B cell (primary cell): ENCODE measurements at regions of chr6 and their contacts with region 1.

Region 1: DNA sequence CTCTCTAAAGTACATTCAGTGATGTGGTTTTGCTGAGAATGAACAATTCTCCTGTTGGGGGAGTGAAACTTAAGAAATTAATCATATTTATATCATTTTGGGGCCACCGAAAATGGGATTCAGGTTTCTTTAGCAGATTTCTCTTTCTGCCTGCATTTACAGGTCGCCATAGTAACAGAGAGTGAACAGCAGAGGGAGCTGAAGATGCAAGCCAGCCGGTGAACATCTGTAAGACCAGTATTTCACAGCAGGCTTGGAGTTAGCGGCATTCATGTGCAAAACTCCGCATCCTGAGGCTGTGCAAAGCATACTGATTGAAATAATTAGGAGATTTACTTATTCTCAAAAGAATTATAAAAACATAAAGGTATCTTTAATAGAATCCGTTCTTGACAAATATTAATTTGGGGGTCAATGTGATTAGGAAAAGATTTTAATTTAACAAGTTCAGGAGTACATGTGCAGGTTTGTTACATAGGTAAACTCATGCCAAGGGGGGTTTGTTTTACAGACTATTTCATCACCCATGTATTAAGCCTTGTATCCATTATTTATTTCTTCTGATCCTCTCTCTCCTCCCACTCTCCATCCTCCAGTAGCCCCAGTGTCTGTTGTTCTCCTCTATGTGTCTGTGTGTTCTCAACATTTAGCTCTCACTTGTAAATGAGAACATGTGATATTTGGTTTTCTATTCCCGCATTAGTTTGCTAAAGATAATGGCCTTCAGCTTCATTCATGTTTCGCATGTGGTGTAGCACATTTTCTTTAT is 17.8 kb upstream of the HSF2 start:
- DNase-seq: peak; percentile 70
- ATAC-seq: peak; percentile 69
- H3K4me3 ChIP-seq: no peak overlapping the region
- H3K4me3 Mint-ChIP-seq: no peak overlapping the region
- H3K27ac ChIP-seq: no peak overlapping the region
- H3K27ac Mint-ChIP-seq: no peak overlapping the region
- H3K4me1 ChIP-seq: no peaks in the 10 kb centered on the region
- H3K4me1 Mint-ChIP-seq: peaks cover under 1% of the 10 kb centered on the region
- H3K27me3 ChIP-seq: no peaks in the 10 kb centered on the region
- H3K27me3 Mint-ChIP-seq: peaks cover 19% of the 10 kb centered on the region
- CTCF ChIP-seq: peak; percentile 87

Region 2: DNA sequence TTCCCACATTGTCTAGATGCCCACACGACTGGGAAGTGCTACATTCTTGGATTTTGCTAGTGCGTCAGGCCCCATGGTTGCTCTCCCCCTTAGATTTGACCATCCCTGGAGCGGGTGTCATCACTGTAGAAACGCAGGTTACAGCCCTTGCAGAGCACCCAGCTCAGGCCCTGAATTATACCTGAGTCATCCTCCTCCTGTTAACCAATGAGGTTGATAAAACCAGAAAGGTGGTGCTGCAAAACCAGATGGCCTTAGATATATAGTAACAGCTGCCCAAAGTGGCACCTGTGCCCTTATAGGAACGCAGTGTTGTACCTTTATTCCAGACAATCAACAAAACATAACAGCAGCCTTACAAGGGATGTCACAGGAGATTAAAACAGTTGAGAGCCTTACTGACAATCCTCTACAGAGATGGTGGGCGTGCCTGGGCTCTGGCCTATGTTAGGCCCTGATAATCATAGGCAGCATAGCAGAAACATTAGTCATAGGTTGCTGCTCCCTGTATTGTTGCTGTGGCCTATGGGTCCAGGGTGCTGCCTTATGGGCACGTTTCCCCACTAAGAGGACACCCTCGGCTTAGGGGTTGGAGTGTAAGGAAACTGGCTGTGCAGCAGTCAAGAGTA is 15.8 kb before region 1 on chr6:
- CTCF ChIA-PET with region 1: no interaction called
- POLR2A ChIA-PET with region 1: no interaction called
- intact Hi-C with region 1: no loop called
- DNase-seq: no peak
- ATAC-seq: no peak
- H3K4me3 ChIP-seq: no peak overlapping the region
- H3K4me3 Mint-ChIP-seq: no peak overlapping the region
- H3K27ac ChIP-seq: no peak overlapping the region
- H3K27ac Mint-ChIP-seq: no peak overlapping the region
- H3K4me1 ChIP-seq: no peaks in the 10 kb centered on the region
- H3K4me1 Mint-ChIP-seq: no peaks in the 10 kb centered on the region
- H3K27me3 ChIP-seq: no peaks in the 10 kb centered on the region
- H3K27me3 Mint-ChIP-seq: no peaks in the 10 kb centered on the region
- CTCF ChIP-seq: no peak

Region 3: DNA sequence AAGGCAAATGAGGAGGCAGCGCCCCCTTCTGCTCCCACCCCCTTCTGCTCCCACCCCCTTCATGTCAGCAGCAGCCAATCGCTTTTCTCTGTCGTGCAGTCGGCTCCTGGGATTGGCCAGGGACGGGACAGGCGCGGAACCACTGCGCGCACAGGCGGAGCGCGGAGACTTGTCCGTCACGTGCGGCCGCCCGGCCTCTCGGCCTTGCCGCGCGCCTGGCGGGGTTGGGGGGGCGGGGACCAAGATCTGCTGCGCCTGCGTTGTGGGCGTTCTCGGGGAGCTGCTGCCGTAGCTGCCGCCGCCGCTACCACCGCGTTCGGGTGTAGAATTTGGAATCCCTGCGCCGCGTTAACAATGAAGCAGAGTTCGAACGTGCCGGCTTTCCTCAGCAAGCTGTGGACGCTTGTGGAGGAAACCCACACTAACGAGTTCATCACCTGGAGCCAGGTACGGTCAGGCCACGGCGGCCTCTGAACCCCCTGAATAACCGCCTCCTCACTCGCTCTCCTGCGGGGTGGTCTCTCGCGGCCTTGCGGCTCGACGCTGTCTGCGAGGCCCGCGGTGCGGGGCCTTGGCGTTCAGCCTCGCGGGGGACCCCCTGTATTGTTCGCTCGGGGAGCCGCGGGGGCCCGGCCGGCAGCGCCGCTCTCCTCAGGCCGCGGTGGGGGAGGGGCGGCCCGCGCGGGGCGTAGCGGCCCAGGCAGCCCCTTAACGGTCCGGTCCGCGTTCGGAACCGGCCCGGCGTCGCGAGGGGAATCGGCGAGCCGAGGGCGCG is 17.9 kb after region 1 on chr6 and contains the start of gene HSF2:
- CTCF ChIA-PET with region 1: interaction called, 8 read pairs
- POLR2A ChIA-PET with region 1: no interaction called
- intact Hi-C with region 1: loop called (anchors 1 kb)
- DNase-seq: peak; percentile 96
- ATAC-seq: peak; percentile 98
- H3K4me3 ChIP-seq: peak within 1 kb of the TSS; percentile 80 to 98 (median 94)
- H3K4me3 Mint-ChIP-seq: peak within 1 kb of the TSS; percentile 97
- H3K27ac ChIP-seq: peak within 1 kb of the TSS; percentile 67 to 80
- H3K27ac Mint-ChIP-seq: peak within 1 kb of the TSS; percentile 89
- H3K4me1 ChIP-seq: peaks cover 12 to 13% of the 10 kb centered on the region in 2 donors
- H3K4me1 Mint-ChIP-seq: peaks cover 20% of the 10 kb centered on the region
- H3K27me3 ChIP-seq: no peaks in the 10 kb centered on the region
- H3K27me3 Mint-ChIP-seq: no peaks in the 10 kb centered on the region
- CTCF ChIP-seq: peak; percentile 15
- total RNA-seq, gene HSF2: 10.6 and 10.8 TPM in 2 replicates

Region 4: GRCh38 chr6:122416825-122417224 is 35.1 kb after region 1 on chr6:
- CTCF ChIA-PET with region 1: interaction called, 4 read pairs
- POLR2A ChIA-PET with region 1: no interaction called
- intact Hi-C with region 1: loop called (anchors 5 kb)
- DNase-seq: no peak
- ATAC-seq: no peak
- H3K4me3 ChIP-seq: no peak overlapping the region
- H3K4me3 Mint-ChIP-seq: no peak overlapping the region
- H3K27ac ChIP-seq: no peak overlapping the region
- H3K27ac Mint-ChIP-seq: no peak overlapping the region
- H3K4me1 ChIP-seq: no peaks in the 10 kb centered on the region
- H3K4me1 Mint-ChIP-seq: no peaks in the 10 kb centered on the region
- H3K27me3 ChIP-seq: no peaks in the 10 kb centered on the region
- H3K27me3 Mint-ChIP-seq: no peaks in the 10 kb centered on the region
- CTCF ChIP-seq: no peak

Region 5: DNA sequence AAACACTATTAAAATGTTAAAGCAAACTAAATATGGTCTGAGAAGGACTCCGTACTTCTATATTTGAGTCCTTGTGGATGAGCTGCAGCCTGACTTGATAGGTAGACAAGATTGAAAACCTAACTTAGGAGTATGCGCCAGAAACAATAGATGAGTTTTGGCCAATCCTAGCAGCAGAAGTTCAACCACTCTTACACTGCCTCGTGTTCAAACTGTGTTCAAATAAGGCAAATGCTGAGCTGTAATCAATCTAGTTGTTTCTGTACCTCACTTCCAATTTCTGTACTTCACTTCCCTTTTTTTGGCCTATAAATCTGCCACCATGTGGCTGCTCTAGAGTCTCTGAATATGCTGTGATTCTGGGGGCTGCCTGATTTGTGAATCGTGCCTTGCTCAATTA is 103.1 kb after region 1 on chr6:
- CTCF ChIA-PET with region 1: interaction called, 11 read pairs
- POLR2A ChIA-PET with region 1: no interaction called
- intact Hi-C with region 1: no loop called
- DNase-seq: peak; percentile 60
- ATAC-seq: peak; percentile 68
- H3K4me3 ChIP-seq: no peak overlapping the region
- H3K4me3 Mint-ChIP-seq: no peak overlapping the region
- H3K27ac ChIP-seq: no peak overlapping the region
- H3K27ac Mint-ChIP-seq: peak overlapping the region; percentile 1
- H3K4me1 ChIP-seq: peaks cover 4% of the 10 kb centered on the region in 2 donors
- H3K4me1 Mint-ChIP-seq: peaks cover 5% of the 10 kb centered on the region
- H3K27me3 ChIP-seq: no peaks in the 10 kb centered on the region
- H3K27me3 Mint-ChIP-seq: no peaks in the 10 kb centered on the region
- CTCF ChIP-seq: peak; percentile 19